HEK293 (cell line): ENCODE measurements at regions of chr6 and their contacts with region 1.

Region 1: GRCh38 chr6:85482905-85483700 is 33.2 kb downstream of the NT5E start:
- H3K4me3 ChIP-seq: no peak overlapping the region
- H3K27ac ChIP-seq: no peak overlapping the region
- H3K4me1 ChIP-seq: no peaks in the 10 kb centered on the region
- CTCF ChIP-seq: peak; percentile 76

Region 2: DNA sequence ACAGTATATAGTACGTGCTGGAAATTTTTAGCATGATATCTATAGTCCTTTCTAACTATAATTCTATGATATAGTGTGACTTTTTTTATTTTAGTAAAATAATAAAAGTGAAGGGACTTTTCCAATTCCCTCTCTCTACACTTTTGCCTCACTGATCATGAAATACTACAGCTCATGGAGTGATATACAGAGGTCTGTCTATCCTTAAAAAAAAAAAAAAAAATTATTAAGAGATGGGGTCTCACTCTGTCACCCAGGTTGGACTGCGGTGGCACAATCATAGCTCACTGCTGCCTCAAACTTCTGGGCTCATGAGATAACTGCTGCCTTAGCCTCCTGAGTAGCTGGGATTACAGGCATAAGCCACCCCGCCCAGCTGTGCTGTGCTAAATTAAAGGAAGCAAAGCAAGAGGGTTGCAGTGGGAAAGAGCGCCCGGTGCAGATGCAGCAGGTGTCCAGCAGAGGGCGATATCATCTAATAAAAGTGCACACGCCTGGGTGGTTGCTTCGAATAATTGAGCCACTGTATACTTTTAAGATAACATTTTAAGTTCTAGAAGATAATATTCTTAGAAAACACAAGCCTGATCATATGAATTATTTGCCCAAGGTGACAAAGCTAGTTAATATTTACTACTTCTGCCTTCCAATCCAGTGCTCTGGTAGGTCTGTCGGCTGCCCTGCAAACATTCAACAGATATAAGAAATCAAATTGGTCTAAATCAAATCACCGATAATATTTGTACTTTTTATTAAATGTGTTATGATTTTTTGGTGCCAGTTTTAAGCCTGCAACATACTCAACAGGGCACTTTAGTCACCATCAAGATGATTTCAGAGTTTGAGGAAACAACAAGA is 128.1 kb before region 1 on chr6:
- CTCF ChIA-PET with region 1: interaction called, 179 read pairs
- POLR2A ChIA-PET with region 1: interaction called, 4 read pairs
- H3K4me3 ChIP-seq: no peak overlapping the region
- H3K27ac ChIP-seq: no peak overlapping the region
- H3K4me1 ChIP-seq: no peaks in the 10 kb centered on the region
- CTCF ChIP-seq: peak; percentile 74

Region 3: DNA sequence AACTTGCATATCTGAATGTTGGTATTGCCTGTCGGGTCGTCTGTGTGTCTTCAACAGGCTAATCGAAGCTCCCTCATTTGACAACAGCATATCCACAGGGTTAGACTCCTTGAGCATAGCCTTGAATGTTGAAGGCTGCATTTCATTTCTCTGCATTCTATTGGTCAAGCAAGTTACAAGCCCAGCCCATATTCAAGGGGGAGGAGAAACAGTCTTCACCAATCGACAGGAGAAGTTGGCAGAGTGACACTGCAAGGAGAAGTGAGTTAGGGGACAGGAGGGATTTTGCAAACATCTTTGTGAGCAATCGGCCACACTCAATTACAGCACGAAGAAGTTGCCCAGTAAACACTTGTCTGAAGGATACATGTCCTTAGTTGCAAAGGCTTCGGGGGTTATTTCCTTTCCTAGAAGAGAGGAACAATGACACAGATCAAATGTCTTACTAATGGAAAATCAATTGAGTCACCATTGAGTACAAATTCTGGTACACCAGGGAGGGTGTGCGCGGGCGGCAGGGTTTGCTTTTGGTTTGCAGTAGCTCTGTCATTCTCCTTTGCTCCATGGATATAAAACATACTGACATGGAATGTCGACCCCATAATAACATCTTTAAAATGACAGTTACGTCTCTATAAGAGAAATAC is 93.8 kb before region 1 on chr6:
- CTCF ChIA-PET with region 1: interaction called, 17 read pairs
- POLR2A ChIA-PET with region 1: no interaction called
- H3K4me3 ChIP-seq: no peak overlapping the region
- H3K27ac ChIP-seq: no peak overlapping the region
- H3K4me1 ChIP-seq: no peaks in the 10 kb centered on the region
- CTCF ChIP-seq: no peak

Region 4: DNA sequence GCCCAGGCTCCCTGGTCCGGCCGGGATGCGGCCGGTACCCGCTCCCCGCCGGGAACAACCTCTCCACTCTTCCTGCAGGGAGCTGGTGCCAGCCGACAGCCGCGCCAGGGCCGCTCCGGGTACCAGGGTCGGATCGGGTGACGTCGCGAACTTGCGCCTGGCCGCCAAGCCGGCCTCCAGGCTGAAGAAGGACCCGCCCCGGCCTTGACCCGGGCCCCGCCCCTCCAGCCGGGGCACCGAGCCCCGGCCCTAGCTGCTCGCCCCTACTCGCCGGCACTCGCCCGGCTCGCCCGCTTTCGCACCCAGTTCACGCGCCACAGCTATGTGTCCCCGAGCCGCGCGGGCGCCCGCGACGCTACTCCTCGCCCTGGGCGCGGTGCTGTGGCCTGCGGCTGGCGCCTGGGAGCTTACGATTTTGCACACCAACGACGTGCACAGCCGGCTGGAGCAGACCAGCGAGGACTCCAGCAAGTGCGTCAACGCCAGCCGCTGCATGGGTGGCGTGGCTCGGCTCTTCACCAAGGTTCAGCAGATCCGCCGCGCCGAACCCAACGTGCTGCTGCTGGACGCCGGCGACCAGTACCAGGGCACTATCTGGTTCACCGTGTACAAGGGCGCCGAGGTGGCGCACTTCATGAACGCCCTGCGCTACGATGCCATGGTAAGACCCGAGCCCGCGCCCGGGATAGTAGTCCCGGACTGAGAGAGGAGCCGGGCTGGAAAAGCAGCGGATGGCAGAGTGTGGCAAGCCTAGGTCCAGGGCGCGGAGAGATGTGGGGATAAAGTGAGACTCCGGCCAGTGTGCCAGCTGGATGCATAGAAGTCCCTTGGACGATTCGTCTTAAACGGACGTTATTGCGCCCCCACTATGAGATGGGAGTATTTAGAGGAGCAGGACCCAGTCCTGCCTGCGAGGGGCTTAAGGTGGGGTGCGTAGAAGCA is 33.0 kb before region 1 on chr6 and contains the start of gene NT5E:
- CTCF ChIA-PET with region 1: interaction called, 39 read pairs
- POLR2A ChIA-PET with region 1: interaction called, 3 read pairs
- H3K4me3 ChIP-seq: peak within 1 kb of the TSS; percentile 57
- H3K27ac ChIP-seq: peak within 1 kb of the TSS; percentile 25; the same call in 1 of the 2 replicates
- H3K4me1 ChIP-seq: peaks cover 11% of the 10 kb centered on the region
- CTCF ChIP-seq: peak; percentile 94

Region 5: DNA sequence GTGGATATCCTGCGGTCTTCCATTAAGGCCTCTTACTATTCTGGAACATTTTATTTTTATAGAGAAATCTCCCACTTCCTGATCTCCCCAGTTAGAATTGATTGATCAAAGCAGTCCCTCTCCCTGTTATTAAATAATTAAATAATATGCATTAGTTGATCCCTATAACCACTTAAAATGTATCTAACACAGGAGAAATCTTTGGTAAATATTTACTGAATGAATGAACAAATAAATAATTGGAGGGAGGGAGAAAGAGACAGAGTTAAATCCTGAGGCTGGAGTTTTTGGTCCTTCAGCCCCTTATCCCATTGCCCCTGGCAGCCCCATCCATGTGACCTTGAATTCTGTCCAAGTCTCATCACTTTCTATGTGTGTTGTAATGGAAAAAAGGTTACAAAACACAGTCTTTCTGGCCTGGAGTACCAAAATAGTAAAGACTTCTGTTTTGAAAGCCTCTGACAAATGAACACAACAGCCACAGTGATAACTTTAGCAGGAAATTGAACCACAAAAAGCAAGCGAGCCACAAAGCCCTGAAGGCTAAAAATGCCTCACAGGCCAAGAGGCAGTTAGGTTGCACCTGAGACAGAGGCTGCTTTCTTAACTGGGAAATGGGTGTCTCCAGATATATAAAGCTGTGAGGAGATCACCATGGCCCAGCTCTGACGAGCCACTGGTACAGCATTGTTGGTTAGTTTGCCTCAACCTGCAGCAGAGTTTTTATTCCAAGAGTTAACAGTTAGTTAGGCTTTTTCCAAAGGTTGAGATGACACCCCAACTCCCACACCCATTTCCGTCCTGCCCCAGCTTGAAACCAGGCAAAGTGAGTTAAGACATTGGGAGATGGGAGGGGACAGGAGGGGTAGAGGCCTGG is 21.9 kb before region 1 on chr6:
- CTCF ChIA-PET with region 1: interaction called, 58 read pairs
- POLR2A ChIA-PET with region 1: interaction called, 3 read pairs
- H3K4me3 ChIP-seq: no peak overlapping the region
- H3K27ac ChIP-seq: no peak overlapping the region
- H3K4me1 ChIP-seq: 0 out of 2 replicates have a peak, but pooled peaks cover 4% of the 10 kb centered on the region
- CTCF ChIP-seq: no peak

Region 6: DNA sequence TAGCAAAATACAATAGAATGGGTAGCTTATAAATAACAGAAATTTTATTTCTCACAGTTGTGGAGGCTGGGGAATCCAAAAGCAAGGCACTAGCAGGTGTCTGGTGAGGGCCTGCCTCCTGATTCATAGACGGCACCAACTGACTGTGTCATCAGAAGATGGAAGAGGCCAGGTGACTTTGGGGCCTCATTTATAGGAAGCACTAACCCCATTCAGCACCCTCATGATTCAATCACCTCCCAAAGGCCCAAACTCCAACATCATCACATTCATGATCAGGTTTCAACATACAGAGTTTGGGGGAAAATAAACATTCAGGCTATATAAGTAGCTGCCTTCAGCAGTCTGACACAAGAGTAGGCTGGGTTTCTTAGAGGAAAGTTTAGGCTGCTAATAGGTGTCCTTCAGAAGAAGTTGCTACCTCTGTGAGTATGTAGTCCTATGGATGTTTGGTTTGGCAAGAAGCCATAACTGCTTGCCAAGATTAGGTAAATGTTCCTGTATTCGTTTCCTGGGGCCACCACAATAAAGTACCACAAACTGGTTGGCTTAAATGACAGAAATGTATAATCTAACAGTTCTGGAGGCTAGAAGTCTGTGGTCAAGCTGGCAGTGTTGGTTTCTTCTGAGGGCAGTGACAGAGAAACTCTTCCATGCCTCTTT is 15.6 kb after region 1 on chr6:
- CTCF ChIA-PET with region 1: interaction called, 89 read pairs
- POLR2A ChIA-PET with region 1: no interaction called
- H3K4me3 ChIP-seq: no peak overlapping the region
- H3K27ac ChIP-seq: peak overlapping the region; percentile 1; the same call in 1 of the 2 replicates
- H3K4me1 ChIP-seq: peaks cover 15% of the 10 kb centered on the region
- CTCF ChIP-seq: no peak

Region 7: DNA sequence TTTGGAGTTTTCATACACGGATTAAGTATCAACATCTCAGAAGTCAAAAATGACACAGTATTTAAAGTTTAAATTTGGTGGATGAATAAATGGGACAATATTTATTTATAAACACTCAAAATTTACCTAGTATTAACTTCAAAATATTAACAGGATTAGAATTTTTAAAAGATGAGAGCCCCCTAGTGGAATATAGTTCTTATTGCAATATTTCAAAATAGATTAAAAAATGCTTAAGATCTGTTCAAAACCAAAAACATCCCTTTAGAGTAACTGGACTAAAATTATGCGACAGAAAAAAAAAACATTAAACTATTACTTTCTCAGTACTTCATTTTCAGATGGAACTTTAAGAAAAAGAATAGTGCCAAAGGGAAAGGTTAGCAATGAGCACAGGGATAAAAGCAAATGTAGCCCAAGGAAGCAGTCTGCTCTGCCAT is 54.0 kb after region 1 on chr6:
- CTCF ChIA-PET with region 1: interaction called, 18 read pairs
- POLR2A ChIA-PET with region 1: no interaction called
- H3K4me3 ChIP-seq: no peak overlapping the region
- H3K27ac ChIP-seq: no peak overlapping the region
- H3K4me1 ChIP-seq: no peaks in the 10 kb centered on the region
- CTCF ChIP-seq: no peak